ENCODE measurements at regions of chr1 and their contacts with region 1.

Region 1: DNA sequence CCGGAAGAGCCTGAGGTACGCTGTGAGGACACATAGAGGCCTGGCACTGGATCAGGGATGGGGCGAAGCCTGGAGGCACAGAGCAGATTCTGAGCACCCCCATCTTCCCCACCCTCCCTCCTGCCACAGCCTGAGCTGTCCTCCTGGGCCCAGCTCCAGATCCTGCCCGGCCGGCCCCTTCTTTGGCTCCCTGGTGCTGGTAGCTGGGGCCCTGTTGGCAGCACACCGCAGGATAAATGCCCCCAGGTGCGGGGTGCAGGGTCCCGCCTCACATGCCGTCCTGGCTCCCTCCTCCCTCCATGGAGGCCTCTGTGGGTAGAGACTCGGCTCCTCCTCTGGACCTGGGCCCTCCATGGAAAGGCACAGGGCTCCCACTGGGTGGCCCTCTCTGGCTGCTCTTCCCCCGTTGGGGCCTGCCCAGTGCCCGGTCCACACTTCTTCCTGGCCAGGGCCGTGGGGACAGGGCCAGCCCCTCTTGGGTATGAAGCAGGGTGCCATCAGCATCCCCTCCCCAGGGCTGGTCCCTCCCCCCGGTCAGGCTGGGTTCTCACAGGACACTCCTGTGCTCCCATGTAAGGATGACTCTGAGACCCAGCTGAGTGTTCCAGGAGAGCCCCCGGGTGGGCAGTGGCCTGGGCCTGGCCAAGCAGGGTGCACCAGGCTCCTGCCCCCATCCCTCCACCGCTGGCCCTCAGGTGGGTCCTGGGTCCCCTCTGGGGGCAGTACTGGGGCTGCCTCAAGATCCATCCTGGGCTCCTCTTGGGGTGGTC is 1.1 kb upstream of the OBSCN start:
- DNase-seq: no peak
- H3K4me3 ChIP-seq: no peak overlapping the region
- H3K27ac ChIP-seq: no peak overlapping the region
- H3K27me3 ChIP-seq: peaks cover 0 to under 1% (median 0%) of the 10 kb centered on the region in 45 donors
- CTCF ChIP-seq: no peak

Region 2: DNA sequence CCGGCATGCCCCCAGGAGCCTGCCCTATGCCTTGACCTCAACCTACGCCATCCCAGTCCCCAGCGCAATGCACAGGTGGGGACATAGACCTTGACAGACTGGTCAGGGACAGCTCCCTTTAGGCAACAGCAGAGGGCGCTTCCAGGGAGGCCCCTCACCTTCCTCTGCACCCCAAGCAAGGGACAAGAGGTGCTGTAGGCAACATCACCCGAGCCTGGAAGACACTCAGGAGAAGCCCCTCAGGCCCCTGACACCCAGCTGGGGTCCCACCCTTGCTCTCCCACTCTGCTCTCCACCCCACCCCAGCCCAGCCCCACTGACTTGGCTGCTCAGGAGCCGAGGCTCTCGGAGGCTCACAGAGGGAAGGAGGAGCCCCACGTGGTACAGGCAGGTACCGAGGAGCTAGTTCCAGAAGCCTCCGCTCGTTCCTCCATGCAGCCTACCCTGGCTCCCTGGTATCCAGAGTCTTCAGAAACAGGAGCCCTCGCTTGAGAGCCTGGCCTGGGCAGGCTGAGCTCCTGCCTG is 202.4 kb before region 1 on chr1:
- intact Hi-C with region 1: loop called in 1 of 2 experiments (anchors 10 kb)
- DNase-seq: peak in 3 of 10 donors; percentile 7 to 29 (median 8)
- H3K4me3 ChIP-seq: no peak overlapping the region
- H3K27ac ChIP-seq: no peak overlapping the region
- H3K27me3 ChIP-seq: peaks cover 3 to 87% (median 69%) of the 10 kb centered on the region in 45 donors
- CTCF ChIP-seq: peak in 9 of 56 donors; percentile 8 to 21 (median 11)

Region 3: GRCh38 chr1:228082135-228082891 is 124.5 kb before region 1 on chr1 and contains the start of gene ARF1:
- intact Hi-C with region 1: no loop called
- DNase-seq: peak; percentile 79 to 95 (median 90)
- H3K4me3 ChIP-seq: peak within 1 kb of the TSS; percentile 64 to 100 (median 99)
- H3K27ac ChIP-seq: peak within 1 kb of the TSS; percentile 66 to 99 (median 96)
- H3K27me3 ChIP-seq: no peaks in the 10 kb centered on the region
- CTCF ChIP-seq: peak in 49 of 56 donors; percentile 10 to 71 (median 47)
- total RNA-seq, gene ARF1: 206 to 403 (median 322) TPM

Region 4: DNA sequence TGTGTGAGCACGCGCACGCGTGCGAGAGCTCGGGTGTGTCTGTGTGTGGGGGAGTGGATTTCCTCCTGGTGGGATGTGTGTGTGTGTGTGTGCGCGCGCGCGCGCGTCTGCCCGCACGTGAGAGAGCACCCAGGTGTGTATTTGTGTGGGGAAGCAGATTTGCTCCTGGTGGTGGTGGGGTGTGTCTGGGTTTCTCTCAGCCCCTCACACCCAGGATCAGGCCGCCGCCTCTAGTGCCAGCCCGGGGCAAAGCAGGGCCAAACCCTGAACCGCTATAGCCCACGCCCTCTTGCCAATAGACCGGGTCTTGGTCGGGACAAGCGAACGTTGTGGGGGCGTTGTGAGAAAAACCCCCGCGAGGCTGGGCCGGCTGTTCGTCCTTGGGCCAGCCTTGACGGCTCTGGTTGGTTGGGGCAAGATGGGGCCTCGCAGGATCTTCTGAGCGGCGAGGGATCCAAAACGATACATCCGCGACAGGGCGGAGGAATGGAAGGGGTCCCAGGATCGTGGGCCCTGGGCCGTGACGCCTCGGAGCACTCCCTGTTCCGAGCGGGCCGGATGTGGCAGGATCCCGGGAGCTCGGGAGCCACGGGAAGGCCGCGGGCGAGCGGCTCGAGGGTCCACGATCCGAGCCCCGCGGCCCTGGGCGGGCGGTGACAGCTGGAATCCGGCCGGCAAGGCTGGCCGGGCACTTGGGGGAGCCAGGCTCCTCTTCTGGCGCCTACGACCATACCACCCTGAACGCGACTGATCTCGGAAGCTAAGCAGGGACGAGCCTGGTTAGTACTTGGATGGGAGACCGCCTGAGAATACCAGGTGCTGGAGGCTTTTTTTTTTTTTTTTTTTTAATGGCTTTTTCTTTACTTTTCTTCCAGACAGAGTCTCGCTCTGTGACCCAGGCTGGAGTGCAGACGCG is 348.6 kb after region 1 on chr1:
- intact Hi-C with region 1: no loop called
- DNase-seq: peak in 1 of 10 donors; percentile 15
- H3K4me3 ChIP-seq: peak overlapping the region in 4 of 59 donors; percentile 15 to 34 (median 18)
- H3K27ac ChIP-seq: no peak overlapping the region
- H3K27me3 ChIP-seq: peaks cover 0 to 25% (median 0%) of the 10 kb centered on the region in 45 donors
- CTCF ChIP-seq: no peak